Activated T-helper 1 cell treated with anti-CD3 and anti-CD28 coated beads, Interleukin-12 subunit alpha, Interleukin-12 subunit beta, Interleukin-2, Interleukin-4 antibody, amounts not matched to agents 30 ng/mL and 10 ng/mL and 1 ng/mL, durations not matched to agents 14 hours and 24 hours and 36 hours (primary cell): ENCODE measurements at regions of chr10 and their contacts with region 1.

Region 1: DNA sequence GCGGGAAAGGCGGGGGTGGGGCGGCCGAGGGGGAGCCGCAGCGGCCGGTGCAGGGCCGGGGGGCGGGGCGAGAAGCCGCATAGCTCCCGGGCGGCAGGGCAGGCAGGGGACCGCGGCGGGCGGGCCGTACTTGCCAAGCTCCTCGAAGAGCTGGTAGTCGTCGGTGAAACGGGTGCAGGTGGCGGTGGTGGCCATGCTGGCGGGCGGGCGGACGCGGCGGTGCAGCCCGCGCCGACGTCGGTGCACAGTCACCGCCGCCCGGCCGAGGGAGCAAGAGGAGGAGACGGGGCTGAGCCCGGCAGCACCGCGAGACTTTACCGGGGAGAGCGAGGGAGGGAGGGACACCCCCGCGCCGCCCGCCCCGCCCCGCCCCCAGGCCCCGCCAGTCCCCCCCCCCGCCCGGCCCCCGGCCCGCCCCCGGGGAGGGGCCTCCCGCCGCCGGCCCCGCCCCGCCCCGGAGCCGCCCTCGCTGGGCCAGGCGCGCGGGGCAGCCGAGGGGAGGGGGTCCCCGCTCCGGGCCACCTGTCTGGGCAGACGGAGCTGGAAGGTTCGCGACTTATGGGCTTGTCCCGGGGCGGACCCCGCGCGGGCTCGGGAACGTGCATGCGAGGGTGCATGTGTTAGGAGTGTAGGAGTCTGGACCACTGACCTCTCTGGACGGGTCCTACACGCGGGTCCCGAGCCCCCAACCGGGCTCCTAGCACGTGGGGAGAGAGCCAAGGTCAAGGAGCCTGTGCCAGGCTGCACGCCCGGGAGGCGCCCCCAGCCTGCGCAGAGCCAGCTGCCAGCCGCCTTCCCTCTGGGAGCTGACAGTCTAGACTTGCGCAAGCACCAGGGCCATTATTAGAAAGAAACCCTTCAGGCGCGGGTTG is at the start of gene CAMK2G:
- DNase-seq: peak; percentile 77
- H3K4me3 Mint-ChIP-seq: peak within 1 kb of the TSS; percentile 87
- H3K27ac Mint-ChIP-seq: peak within 1 kb of the TSS; percentile 58
- H3K4me1 Mint-ChIP-seq: peaks cover 72% of the 10 kb centered on the region
- H3K27me3 Mint-ChIP-seq: peaks cover 12% of the 10 kb centered on the region
- total RNA-seq, gene CAMK2G: 15.9 and 18.7 TPM in 2 replicates

Region 2: GRCh38 chr10:73810735-73811465 is 63.6 kb before region 1 on chr10:
- intact Hi-C with region 1: loop called (anchors 1 kb)
- DNase-seq: peak; percentile 54
- H3K4me3 Mint-ChIP-seq: peak overlapping the region; percentile 97
- H3K27ac Mint-ChIP-seq: peak overlapping the region; percentile 98
- H3K4me1 Mint-ChIP-seq: peaks cover 50% of the 10 kb centered on the region
- H3K27me3 Mint-ChIP-seq: no peaks in the 10 kb centered on the region